HCT116 (cell line): ENCODE measurements at regions of chr4 and their contacts with region 1.

Region 1: GRCh38 chr4:2186133-2186864 is 55.6 kb downstream of the HAUS3 start:
- DNase-seq: peak; percentile 52
- ATAC-seq: peak; percentile 99
- H3K4me3 ChIP-seq: no peak overlapping the region
- H3K27ac ChIP-seq: no peak overlapping the region
- H3K4me1 ChIP-seq: no peaks in the 10 kb centered on the region
- H3K27me3 ChIP-seq: no peaks in the 10 kb centered on the region
- CTCF ChIP-seq: peak; percentile 73 to 89 (median 83)
- POLR2A ChIP-seq: no peak
- RAD21 ChIP-seq: peak; percentile 95

Region 2: GRCh38 chr4:1809754-1810511 is 376.4 kb before region 1 on chr4:
- CTCF ChIA-PET with region 1: no interaction called
- POLR2A ChIA-PET with region 1: no interaction called
- RAD21 ChIA-PET with region 1: no interaction called
- intact Hi-C with region 1: loop called (anchors 5 kb)
- DNase-seq: peak; percentile 34
- ATAC-seq: peak; percentile 92
- H3K4me3 ChIP-seq: no peak overlapping the region
- H3K27ac ChIP-seq: peak overlapping the region; percentile 3; the same call in 1 of the 2 replicates
- H3K4me1 ChIP-seq: peaks cover 0 to 5% of the 10 kb centered on the region in 2 experiments; a peak in 1 of 4 replicates
- H3K27me3 ChIP-seq: no peaks in the 10 kb centered on the region
- CTCF ChIP-seq: peak; percentile 89 to 98 (median 95)
- POLR2A ChIP-seq: no peak
- RAD21 ChIP-seq: peak; percentile 97

Region 3: GRCh38 chr4:1910643-1911042 is 275.7 kb before region 1 on chr4:
- CTCF ChIA-PET with region 1: interaction called, 3 read pairs
- POLR2A ChIA-PET with region 1: no interaction called
- RAD21 ChIA-PET with region 1: no interaction called
- intact Hi-C with region 1: loop called (anchors 1 kb)
- DNase-seq: no peak
- ATAC-seq: peak; percentile 87
- H3K4me3 ChIP-seq: no peak overlapping the region
- H3K27ac ChIP-seq: peak overlapping the region; percentile 36; the same call in 1 of the 2 replicates
- H3K4me1 ChIP-seq: peaks cover 5 to 33% of the 10 kb centered on the region in 2 experiments; a peak in 2 of 4 replicates
- H3K27me3 ChIP-seq: no peaks in the 10 kb centered on the region
- CTCF ChIP-seq: peak; percentile 48 to 64 (median 62); a peak in 5 of 6 replicates
- POLR2A ChIP-seq: no peak
- RAD21 ChIP-seq: peak; percentile 70

Region 4: GRCh38 chr4:2008875-2009703 is 177.2 kb before region 1 on chr4 and contains the start of gene NELFA:
- CTCF ChIA-PET with region 1: no interaction called
- POLR2A ChIA-PET with region 1: no interaction called
- RAD21 ChIA-PET with region 1: no interaction called
- intact Hi-C with region 1: loop called (anchors 1 kb)
- DNase-seq: peak; percentile 93
- ATAC-seq: peak; percentile 89
- H3K4me3 ChIP-seq: peak within 1 kb of the TSS; percentile 97 to 98
- H3K27ac ChIP-seq: peak within 1 kb of the TSS; percentile 99
- H3K4me1 ChIP-seq: peaks cover 10 to 24% of the 10 kb centered on the region in 2 experiments; a peak in 3 of 4 replicates
- H3K27me3 ChIP-seq: no peaks in the 10 kb centered on the region
- CTCF ChIP-seq: peak in 1 of 3 experiments; percentile 45; a peak in 2 of 6 replicates
- POLR2A ChIP-seq: peak; percentile 51
- RAD21 ChIP-seq: peak; percentile 18; the same call in 1 of the 2 replicates
- total RNA-seq, gene NELFA: 56.1 TPM